ENCODE measurements at regions of chr17 and their contacts with region 1.

Region 1: DNA sequence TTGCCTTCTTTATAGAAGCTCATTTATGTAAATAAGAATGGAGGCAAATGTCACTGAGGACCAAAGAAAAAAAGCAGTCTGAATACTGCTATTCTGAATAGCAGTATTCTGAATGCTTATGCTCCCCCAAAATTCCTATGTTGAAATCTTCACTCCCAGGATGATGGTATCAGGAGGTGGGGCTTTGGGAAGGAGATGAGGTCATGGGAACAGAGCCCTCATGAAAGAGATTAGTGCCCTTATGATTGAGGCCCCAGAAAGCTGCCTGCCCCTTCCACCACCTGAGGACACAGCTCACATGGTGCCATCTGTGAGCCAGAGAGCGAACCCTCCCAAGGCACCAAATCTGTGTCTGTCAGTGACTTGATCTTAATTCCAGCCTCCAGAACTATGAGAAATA is 28.8 kb downstream of the HEATR6 start:
- DNase-seq: no peak
- CTCF ChIP-seq: no peak

Region 2: DNA sequence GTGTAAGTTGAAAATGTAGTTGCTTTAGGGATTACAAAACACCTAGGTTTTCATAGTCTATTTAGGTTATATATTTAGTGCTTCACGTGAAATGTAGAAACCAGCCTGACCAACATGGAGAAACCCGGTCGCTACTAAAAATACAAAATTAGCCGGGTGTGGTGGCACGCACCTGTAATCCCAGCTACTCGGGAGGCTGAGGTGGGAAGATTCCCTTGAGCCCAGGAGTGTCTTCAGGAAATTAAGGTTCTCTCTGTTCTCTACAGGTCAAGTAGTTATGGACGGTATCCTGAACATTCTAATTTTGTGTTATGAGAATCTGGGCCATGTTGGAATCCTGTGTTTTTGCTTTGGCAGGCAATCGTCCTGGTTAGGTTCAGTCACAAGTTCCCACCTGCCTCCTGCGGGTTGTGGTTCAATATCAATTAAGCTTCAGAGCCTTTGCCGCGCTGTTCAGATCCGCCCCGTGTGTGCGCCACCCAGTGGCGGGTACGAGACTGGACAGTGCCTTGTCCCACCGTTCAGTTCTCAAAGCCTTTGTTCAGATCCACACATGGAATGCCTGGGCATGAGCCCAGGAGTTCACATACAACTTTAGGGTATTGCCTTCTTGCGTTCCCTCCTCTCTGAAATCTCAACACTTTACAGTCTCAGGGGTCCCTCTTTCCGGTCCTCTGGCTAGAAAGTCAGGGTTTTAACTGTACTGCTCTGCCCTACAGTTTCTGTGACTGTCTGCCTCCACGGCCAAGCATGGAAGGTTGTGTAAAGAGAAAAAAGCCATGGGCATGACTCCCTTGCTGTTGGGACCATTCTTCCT is 12.9 kb before region 1 on chr17:
- CTCF ChIA-PET with region 1: interaction called, 42 read pairs
- POLR2A ChIA-PET with region 1: no interaction called
- DNase-seq: peak; percentile 77
- CTCF ChIP-seq: peak; percentile 94

Measured in GM10248 (cell line).